ENCODE measurements at regions of chr7 and their contacts with region 1.

Region 1: GRCh38 chr7:130982160-130982638 is 248.2 kb upstream of the KLF14 start:
- DNase-seq: peak; percentile 54
- H3K4me3 ChIP-seq: no peak overlapping the region
- H3K27ac ChIP-seq: no peak overlapping the region
- H3K4me1 ChIP-seq: peaks cover 0 to 13% of the 10 kb centered on the region in 2 experiments; a peak in 2 of 4 replicates
- H3K27me3 ChIP-seq: no peaks in the 10 kb centered on the region
- CTCF ChIP-seq: peak; percentile 97
- EP300 ChIP-seq: no peak
- RAD21 ChIP-seq: peak; percentile 86

Region 2: DNA sequence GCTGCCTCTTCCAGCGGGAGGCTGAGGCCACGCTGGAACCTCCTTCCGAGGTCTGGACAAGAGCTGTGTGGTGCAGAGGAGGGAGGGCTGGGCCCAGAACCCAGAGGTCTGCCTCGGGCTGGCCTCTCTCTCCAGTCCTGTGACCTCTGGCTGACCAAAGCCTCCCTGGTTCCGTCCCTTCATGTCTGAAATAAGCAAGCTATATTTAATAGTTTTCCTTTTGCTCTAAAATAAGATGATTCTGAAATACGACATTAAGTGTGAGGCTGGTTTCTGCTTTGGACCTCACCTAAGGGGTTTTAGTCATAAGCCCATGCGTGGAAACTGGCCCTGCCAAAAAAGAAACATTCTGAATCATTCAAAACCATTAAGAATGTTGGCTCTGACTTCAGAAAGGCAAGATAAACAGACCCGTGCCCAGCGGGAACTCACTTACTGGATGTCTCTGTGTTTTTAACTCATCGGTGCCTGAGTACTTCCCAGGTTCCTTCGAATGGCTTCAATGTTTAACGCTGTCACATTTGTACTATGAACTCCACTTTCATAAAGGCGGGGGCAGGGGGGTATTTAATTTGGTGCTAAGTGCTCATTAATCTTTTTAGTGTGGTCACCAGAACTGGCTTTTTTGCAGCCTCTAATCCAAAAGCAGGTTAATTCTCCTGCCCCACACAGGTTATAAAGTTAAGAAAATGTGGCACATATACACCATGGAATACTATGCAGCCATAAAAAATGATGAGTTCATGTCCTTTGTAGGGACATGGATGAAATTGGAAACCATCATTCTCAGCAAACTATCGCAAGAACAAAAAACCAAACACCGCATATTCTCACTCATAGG is 90.7 kb before region 1 on chr7:
- CTCF ChIA-PET with region 1: interaction called, 45 read pairs
- POLR2A ChIA-PET with region 1: no interaction called
- DNase-seq: no peak
- H3K4me3 ChIP-seq: peak overlapping the region in 1 of 2 experiments; percentile 17; a peak in 2 of 4 replicates
- H3K27ac ChIP-seq: peak overlapping the region; percentile 82 to 100
- H3K4me1 ChIP-seq: peaks cover 17 to 81% of the 10 kb centered on the region in 2 experiments
- H3K27me3 ChIP-seq: no peaks in the 10 kb centered on the region
- CTCF ChIP-seq: no peak
- EP300 ChIP-seq: peak in 1 of 2 experiments; percentile 83; a peak in 2 of 4 replicates
- RAD21 ChIP-seq: no peak

Region 3: GRCh38 chr7:130961128-130961601 is 21.0 kb before region 1 on chr7:
- CTCF ChIA-PET with region 1: interaction called, 21 read pairs
- POLR2A ChIA-PET with region 1: no interaction called
- DNase-seq: no peak
- H3K4me3 ChIP-seq: peak overlapping the region; percentile 43 to 57; a peak in 3 of 4 replicates
- H3K27ac ChIP-seq: peak overlapping the region; percentile 92 to 100
- H3K4me1 ChIP-seq: peaks cover 4 to 50% of the 10 kb centered on the region in 2 experiments
- H3K27me3 ChIP-seq: no peaks in the 10 kb centered on the region
- CTCF ChIP-seq: no peak
- EP300 ChIP-seq: no peak
- RAD21 ChIP-seq: no peak

Region 4: DNA sequence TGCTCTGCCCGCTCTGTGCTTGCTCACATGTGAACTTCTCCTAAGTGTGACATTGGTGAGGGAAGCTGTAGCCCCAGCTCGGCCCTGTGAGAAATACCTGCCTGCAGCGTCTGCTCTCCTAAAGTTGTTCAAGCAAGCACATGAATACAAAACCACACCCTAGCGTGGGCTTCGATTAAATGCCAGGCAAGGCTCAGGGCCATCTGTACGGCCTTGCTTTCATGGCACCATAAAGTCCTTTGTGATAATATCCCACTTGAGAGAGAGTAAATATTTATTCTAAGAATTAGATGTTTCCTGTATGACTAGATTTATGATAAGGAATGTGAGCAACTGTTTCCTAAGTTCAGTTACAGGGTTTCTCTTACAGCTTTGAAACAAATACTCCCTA is 14.6 kb after region 1 on chr7:
- CTCF ChIA-PET with region 1: interaction called, 105 read pairs
- POLR2A ChIA-PET with region 1: no interaction called
- DNase-seq: no peak
- H3K4me3 ChIP-seq: no peak overlapping the region
- H3K27ac ChIP-seq: peak overlapping the region in 1 of 2 experiments; percentile 51; a peak in 2 of 4 replicates
- H3K4me1 ChIP-seq: peaks cover 5 to 31% of the 10 kb centered on the region in 2 experiments; a peak in 3 of 4 replicates
- H3K27me3 ChIP-seq: no peaks in the 10 kb centered on the region
- CTCF ChIP-seq: no peak
- EP300 ChIP-seq: no peak
- RAD21 ChIP-seq: no peak

Region 5: DNA sequence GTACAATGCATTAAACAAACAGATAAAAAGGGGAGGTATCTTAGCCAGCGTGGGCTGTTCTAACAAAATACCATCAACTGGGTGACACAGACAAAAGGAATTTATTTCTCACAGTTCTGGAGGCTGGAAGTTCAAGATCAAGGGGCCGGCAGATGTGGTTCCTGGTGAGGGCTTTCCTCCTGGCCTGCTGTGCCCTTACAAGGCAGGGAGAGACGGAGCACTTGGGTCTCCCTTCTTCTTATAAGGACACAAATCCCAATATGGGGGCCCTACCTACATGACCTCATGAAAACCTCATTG is 33.4 kb after region 1 on chr7:
- CTCF ChIA-PET with region 1: interaction called, 20 read pairs
- POLR2A ChIA-PET with region 1: no interaction called
- DNase-seq: no peak
- H3K4me3 ChIP-seq: no peak overlapping the region
- H3K27ac ChIP-seq: no peak overlapping the region
- H3K4me1 ChIP-seq: peaks cover 25 to 34% of the 10 kb centered on the region in 2 experiments
- H3K27me3 ChIP-seq: no peaks in the 10 kb centered on the region
- CTCF ChIP-seq: no peak
- EP300 ChIP-seq: no peak
- RAD21 ChIP-seq: no peak

Region 6: GRCh38 chr7:131027287-131027773 is 45.1 kb after region 1 on chr7:
- CTCF ChIA-PET with region 1: interaction called, 25 read pairs
- POLR2A ChIA-PET with region 1: no interaction called
- DNase-seq: peak; percentile 65
- H3K4me3 ChIP-seq: no peak overlapping the region
- H3K27ac ChIP-seq: peak overlapping the region; percentile 13 to 46
- H3K4me1 ChIP-seq: peaks cover 9 to 20% of the 10 kb centered on the region in 2 experiments; a peak in 3 of 4 replicates
- H3K27me3 ChIP-seq: no peaks in the 10 kb centered on the region
- CTCF ChIP-seq: peak; percentile 15; the same call in 1 of the 2 replicates
- EP300 ChIP-seq: no peak; a peak in 1 of 4 replicates
- RAD21 ChIP-seq: no peak

Measured in SK-N-SH (cell line).